ENCODE measurements at regions of chr13 and their contacts with region 1.

Region 1: DNA sequence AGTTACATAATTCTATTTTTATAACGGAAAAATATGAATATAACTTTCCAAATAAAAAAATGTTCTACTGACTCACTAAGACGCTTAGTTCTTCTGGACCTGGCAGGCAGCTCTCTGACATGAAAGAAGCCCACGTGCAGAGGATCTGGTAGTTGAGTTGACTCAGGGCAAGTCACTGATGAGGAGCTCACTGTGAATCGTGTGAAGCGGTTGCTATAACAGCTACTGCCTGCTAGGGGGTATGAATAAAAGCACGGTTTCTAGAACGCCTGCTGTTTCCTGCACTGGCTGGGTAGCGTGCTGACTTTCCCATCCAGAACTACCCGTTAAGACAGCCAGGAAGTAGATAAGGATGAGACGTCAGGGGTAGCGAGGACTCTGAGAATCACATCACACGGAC is 54.7 kb upstream of the WASF3 start:
- DNase-seq: no peak
- H3K4me3 ChIP-seq: no peak overlapping the region
- H3K27ac ChIP-seq: no peak overlapping the region
- H3K4me1 ChIP-seq: peaks cover 10 to 20% of the 10 kb centered on the region in 2 experiments; a peak in 3 of 4 replicates
- H3K27me3 ChIP-seq: no peaks in the 10 kb centered on the region
- CTCF ChIP-seq: no peak
- EP300 ChIP-seq: no peak
- RAD21 ChIP-seq: no peak

Region 2: GRCh38 chr13:26255691-26256277 is 247.0 kb before region 1 on chr13:
- CTCF ChIA-PET with region 1: interaction called, 10 read pairs
- POLR2A ChIA-PET with region 1: no interaction called
- DNase-seq: peak; percentile 39
- H3K4me3 ChIP-seq: peak overlapping the region; percentile 69 to 90
- H3K27ac ChIP-seq: peak overlapping the region in 1 of 2 experiments; percentile 88; a peak in 1 of 4 replicates
- H3K4me1 ChIP-seq: peaks cover 8 to 10% of the 10 kb centered on the region in 2 experiments; a peak in 2 of 4 replicates
- H3K27me3 ChIP-seq: no peaks in the 10 kb centered on the region
- CTCF ChIP-seq: peak; percentile 63
- EP300 ChIP-seq: no peak
- RAD21 ChIP-seq: peak; percentile 37; the same call in 1 of the 2 replicates

Region 3: GRCh38 chr13:26482451-26483197 is 20.2 kb before region 1 on chr13:
- CTCF ChIA-PET with region 1: interaction called, 37 read pairs
- POLR2A ChIA-PET with region 1: no interaction called
- DNase-seq: peak; percentile 81
- H3K4me3 ChIP-seq: peak overlapping the region in 1 of 2 experiments; percentile 7; a peak in 2 of 4 replicates
- H3K27ac ChIP-seq: no peak overlapping the region
- H3K4me1 ChIP-seq: peaks cover 0 to 2% of the 10 kb centered on the region in 2 experiments; a peak in 1 of 4 replicates
- H3K27me3 ChIP-seq: no peaks in the 10 kb centered on the region
- CTCF ChIP-seq: peak; percentile 93
- EP300 ChIP-seq: no peak
- RAD21 ChIP-seq: peak; percentile 73

Region 4: GRCh38 chr13:26518451-26518959 is 15.7 kb after region 1 on chr13:
- CTCF ChIA-PET with region 1: interaction called, 10 read pairs
- POLR2A ChIA-PET with region 1: no interaction called
- DNase-seq: no peak
- H3K4me3 ChIP-seq: no peak overlapping the region
- H3K27ac ChIP-seq: no peak overlapping the region
- H3K4me1 ChIP-seq: no peaks in the 10 kb centered on the region
- H3K27me3 ChIP-seq: no peaks in the 10 kb centered on the region; the same call in 1 of the 2 replicates
- CTCF ChIP-seq: no peak
- EP300 ChIP-seq: no peak
- RAD21 ChIP-seq: no peak

Measured in SK-N-SH (cell line).